HepG2 (cell line): ENCODE measurements at regions of chr4 and their contacts with region 1.

Region 1: DNA sequence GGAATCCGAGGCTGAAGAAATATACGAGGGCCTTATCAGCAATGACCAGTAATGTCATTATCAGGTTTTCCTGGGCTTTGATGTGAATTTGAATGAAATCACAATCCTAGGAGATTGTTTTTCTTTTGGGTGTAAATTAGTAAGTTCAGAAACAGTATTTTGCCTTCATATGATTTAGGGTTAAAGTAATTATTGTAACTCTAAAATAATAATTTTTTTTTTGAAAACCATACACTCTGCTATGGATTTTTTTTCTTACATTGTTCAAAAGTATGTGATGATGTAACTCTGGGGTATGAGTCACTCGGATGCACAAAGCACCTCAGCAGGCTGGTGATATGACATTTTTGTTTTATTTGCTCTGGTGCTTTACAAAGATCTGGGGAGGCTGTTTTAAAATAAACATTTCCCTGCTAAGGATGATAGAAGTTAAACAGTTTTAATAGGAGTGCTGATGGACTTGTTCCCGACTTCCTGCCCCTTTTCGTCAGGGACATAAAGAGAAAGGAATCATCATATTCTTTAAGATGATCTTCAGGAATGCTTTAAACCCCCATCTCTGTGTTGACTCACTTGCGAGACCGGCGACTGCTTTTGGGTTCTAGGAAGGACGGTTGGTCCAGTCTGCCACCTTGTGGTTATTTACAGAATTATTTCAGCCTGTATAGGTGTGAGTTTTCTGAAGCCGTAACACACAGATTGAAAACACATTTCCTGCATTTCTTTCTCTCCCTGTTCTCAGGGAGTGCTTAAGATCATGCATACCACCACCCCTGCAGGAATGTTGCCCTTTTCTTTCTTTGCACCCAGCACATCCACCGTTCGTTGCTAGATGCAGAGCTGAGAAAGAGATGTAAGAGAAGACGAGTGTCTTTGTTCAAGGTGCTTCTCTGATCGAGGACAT is 72.5 kb downstream of the RAPGEF2 start:
- DNase-seq: peak; percentile 77
- ATAC-seq: peak; percentile 93
- H3K4me3 ChIP-seq: peak overlapping the region in 1 of 3 experiments; percentile 20; a peak in 1 of 6 replicates
- H3K27ac ChIP-seq: no peak overlapping the region
- H3K4me1 ChIP-seq: peaks cover 41% of the 10 kb centered on the region
- H3K27me3 ChIP-seq: no peaks in the 10 kb centered on the region
- CTCF ChIP-seq: peak; percentile 85
- EP300 ChIP-seq: no peak
- POLR2A ChIP-seq: no peak
- RAD21 ChIP-seq: peak; percentile 76

Region 2: DNA sequence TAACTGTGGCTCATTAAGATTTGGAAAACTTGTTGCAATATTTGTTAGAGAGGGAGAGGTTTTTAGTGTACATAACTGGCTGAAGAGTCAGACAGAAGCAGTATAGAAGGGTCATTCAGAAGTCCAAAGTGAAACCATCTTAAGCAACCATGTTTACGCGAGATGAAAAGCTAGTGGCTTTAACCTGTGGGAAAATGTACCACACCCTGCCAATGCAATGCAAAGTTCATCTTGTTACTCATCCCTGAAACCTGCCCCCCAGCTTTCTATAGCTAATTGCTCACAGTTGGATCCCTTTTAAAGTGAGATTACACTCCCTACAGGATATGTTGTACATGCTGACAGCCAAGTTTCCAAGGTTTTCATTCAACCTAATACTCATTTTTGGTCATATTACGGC is 169.1 kb before region 1 on chr4:
- CTCF ChIA-PET with region 1: no interaction called
- POLR2A ChIA-PET with region 1: no interaction called
- in situ Hi-C with region 1: no loop called
- intact Hi-C with region 1: loop called (anchors 10 kb)
- DNase-seq: peak; percentile 88
- ATAC-seq: peak; percentile 95
- H3K4me3 ChIP-seq: peak overlapping the region; percentile 21 to 58 (median 36); a peak in 4 of 6 replicates
- H3K27ac ChIP-seq: peak overlapping the region; percentile 27
- H3K4me1 ChIP-seq: peaks cover 34% of the 10 kb centered on the region
- H3K27me3 ChIP-seq: no peaks in the 10 kb centered on the region
- CTCF ChIP-seq: no peak
- EP300 ChIP-seq: peak in 1 of 2 experiments; percentile 66; a peak in 2 of 4 replicates
- POLR2A ChIP-seq: no peak
- RAD21 ChIP-seq: no peak

Region 3: GRCh38 chr4:159027535-159027934 is 147.8 kb before region 1 on chr4:
- CTCF ChIA-PET with region 1: no interaction called
- POLR2A ChIA-PET with region 1: no interaction called
- in situ Hi-C with region 1: loop called (anchors 10 kb)
- intact Hi-C with region 1: no loop called
- DNase-seq: no peak
- ATAC-seq: no peak
- H3K4me3 ChIP-seq: no peak overlapping the region
- H3K27ac ChIP-seq: no peak overlapping the region
- H3K4me1 ChIP-seq: peaks cover 9% of the 10 kb centered on the region
- H3K27me3 ChIP-seq: no peaks in the 10 kb centered on the region
- CTCF ChIP-seq: no peak
- EP300 ChIP-seq: no peak
- POLR2A ChIP-seq: no peak
- RAD21 ChIP-seq: no peak

Region 4: GRCh38 chr4:159048166-159048886 is 127.0 kb before region 1 on chr4:
- CTCF ChIA-PET with region 1: no interaction called
- POLR2A ChIA-PET with region 1: no interaction called
- in situ Hi-C with region 1: no loop called
- intact Hi-C with region 1: loop called (anchors 10 kb)
- DNase-seq: peak; percentile 84
- ATAC-seq: peak; percentile 95
- H3K4me3 ChIP-seq: peak overlapping the region; percentile 17 to 63 (median 58)
- H3K27ac ChIP-seq: peak overlapping the region; percentile 33
- H3K4me1 ChIP-seq: peaks cover 31% of the 10 kb centered on the region
- H3K27me3 ChIP-seq: no peaks in the 10 kb centered on the region
- CTCF ChIP-seq: peak; percentile 23
- EP300 ChIP-seq: peak in 1 of 2 experiments; percentile 29; a peak in 1 of 4 replicates
- POLR2A ChIP-seq: no peak
- RAD21 ChIP-seq: no peak

Region 5: DNA sequence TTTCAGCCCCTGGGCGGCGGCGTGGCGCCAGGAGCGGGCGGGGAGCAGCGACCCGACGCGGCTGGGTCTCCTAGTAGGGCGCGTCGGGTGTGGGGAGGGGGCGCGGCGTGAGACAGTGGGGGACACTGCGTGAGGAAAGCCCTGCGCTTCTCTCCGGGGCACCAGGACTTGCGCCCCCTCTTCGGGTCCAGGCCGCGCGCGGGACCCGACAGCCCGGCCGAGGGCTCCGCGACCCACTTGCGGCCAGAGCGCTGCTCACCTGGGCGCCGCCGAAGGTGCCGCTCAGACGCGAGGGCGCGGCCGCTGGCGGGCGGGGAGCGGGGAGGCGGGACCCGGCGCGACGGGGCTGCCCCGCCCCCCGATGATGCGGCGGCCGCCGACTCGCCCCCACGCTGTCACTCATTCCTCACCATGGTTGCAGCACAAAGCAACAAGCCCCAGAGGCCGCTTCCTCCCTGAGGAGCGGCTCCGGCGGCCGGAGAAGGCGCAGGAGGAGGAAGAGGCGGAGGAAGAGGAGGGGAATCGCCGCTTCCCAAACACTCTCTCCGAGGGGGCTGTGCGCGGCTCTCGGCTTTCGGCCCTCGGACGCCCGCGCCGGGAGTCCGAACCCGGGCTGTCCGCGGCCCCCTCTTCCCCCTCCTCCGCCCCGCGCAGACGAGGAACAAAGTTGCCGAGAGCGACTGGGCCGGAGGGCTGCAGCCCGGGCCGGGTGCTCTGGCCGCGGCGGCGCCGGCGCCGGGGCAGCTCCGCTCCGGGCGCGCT is 72.5 kb before region 1 on chr4 and contains the start of gene RAPGEF2:
- CTCF ChIA-PET with region 1: interaction called, 3 read pairs
- POLR2A ChIA-PET with region 1: no interaction called
- in situ Hi-C with region 1: loop called (anchors 10 kb)
- intact Hi-C with region 1: loop called (anchors 1 kb)
- DNase-seq: peak; percentile 84
- ATAC-seq: peak; percentile 84
- H3K4me3 ChIP-seq: peak within 1 kb of the TSS; percentile 93 to 99 (median 96)
- H3K27ac ChIP-seq: peak within 1 kb of the TSS; percentile 85
- H3K4me1 ChIP-seq: peaks cover 43% of the 10 kb centered on the region
- H3K27me3 ChIP-seq: no peaks in the 10 kb centered on the region; a peak in 1 of 5 replicates
- CTCF ChIP-seq: peak; percentile 38; the same call in 1 of the 2 replicates
- EP300 ChIP-seq: no peak
- POLR2A ChIP-seq: peak; percentile 63 to 72; a peak in 3 of 4 replicates
- RAD21 ChIP-seq: no peak; the same call in 1 of the 2 replicates
- total RNA-seq, gene RAPGEF2: 23.0 and 24.3 TPM in 2 replicates

Region 6: DNA sequence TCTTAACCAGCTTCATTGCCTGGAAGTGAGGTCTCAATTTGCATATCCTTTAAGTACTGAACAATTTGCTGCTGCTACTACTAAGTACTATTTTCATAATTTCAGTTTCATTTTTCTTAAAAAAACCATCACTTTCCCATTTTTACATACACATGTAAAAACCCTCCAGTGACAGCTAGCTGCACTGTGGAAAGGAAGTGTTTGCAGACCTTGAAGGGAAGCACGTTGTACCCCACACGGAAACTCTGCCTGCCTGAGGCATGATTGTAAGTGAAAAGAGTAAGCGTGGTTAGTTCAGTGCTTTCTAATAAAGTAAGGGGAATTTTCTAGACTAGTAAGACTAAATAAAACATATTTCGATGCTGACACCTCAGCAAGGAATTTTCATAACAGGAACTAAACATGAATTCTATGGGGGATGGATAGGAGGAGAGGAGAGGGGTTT is 31.1 kb after region 1 on chr4:
- CTCF ChIA-PET with region 1: no interaction called
- POLR2A ChIA-PET with region 1: no interaction called
- in situ Hi-C with region 1: no loop called
- intact Hi-C with region 1: loop called (anchors 1 kb)
- DNase-seq: no peak
- ATAC-seq: no peak
- H3K4me3 ChIP-seq: no peak overlapping the region
- H3K27ac ChIP-seq: no peak overlapping the region
- H3K4me1 ChIP-seq: peaks cover 13% of the 10 kb centered on the region
- H3K27me3 ChIP-seq: no peaks in the 10 kb centered on the region
- CTCF ChIP-seq: no peak
- EP300 ChIP-seq: no peak
- POLR2A ChIP-seq: no peak
- RAD21 ChIP-seq: no peak

Region 7: DNA sequence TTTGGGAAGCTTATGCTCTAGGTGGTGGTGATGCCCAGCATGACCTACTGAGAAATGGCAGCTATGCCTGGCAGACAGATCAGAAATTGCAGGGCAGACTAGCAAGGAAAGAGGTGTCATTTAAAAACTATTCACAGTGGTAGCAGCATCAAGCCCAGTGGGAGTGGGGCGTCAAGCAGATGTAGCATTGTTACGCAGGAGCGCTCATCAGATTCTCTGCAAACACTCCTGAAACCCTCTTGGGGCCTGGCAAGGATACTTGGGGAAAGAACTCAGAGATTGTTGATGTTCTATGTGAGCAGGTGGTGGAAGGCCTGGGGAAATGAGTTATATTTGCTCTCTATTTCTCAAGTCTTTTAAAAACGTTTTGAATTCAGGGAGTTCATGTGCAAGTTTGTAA is 365.2 kb after region 1 on chr4:
- CTCF ChIA-PET with region 1: no interaction called
- POLR2A ChIA-PET with region 1: no interaction called
- in situ Hi-C with region 1: no loop called
- intact Hi-C with region 1: no loop called
- DNase-seq: no peak
- ATAC-seq: no peak
- H3K4me3 ChIP-seq: no peak overlapping the region
- H3K27ac ChIP-seq: no peak overlapping the region
- H3K4me1 ChIP-seq: no peaks in the 10 kb centered on the region; the same call in 1 of the 2 replicates
- H3K27me3 ChIP-seq: no peaks in the 10 kb centered on the region; a peak in 1 of 5 replicates
- CTCF ChIP-seq: no peak
- EP300 ChIP-seq: no peak
- POLR2A ChIP-seq: no peak
- RAD21 ChIP-seq: no peak